Caki2 (cell line): ENCODE measurements at regions of chr21 and their contacts with region 1.

Region 1: DNA sequence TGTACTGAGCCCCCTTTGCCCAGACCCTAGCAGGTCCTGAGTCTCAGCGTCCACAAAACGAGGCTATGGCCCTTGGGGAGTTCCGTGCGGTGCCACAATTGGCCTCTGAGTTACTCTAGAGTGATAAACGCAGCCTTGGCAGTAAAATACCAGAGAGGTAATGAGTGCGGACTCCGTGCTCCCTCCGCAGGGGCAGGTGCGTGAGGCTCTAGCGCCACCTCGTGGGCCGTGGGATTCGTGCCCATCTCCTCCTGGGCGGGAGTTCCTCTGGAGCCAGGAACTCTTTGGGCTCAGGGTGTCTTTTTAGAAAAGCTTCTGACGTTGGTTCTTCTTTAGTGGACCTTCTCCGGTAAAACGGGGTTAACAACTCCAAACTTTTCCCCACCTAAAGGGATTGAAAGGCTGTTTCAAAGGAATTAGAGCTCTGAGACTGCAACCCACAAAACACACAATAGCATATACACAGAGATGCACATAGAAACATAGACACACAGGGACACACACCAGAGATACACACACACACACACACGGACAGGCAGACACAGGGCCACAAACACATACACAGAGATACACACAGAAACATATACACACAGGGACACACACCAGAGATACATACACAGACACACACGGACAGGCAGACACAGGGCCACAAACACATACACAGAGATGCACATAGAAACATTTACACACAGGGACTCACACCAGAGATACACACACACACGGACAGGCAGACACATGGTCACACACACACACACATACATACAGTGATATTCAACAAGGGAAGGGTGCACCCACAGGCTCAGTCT is 99.4 kb downstream of the KCNJ15 start:
- DNase-seq: peak; percentile 66

Region 2: GRCh38 chr21:38159355-38159754 is 196.8 kb before region 1 on chr21:
- in situ Hi-C with region 1: loop called (anchors 25 kb)
- DNase-seq: peak; percentile 62